Activated naive CD4-positive, alpha-beta T cell treated with anti-CD3 and anti-CD28 coated beads for 36 hours (primary cell): ENCODE measurements at regions of chr4 and their contacts with region 1.

Region 1: GRCh38 chr4:26319467-26319948 is 1.3 kb upstream of the RBPJ start:
- DNase-seq: peak; percentile 99
- H3K4me3 Mint-ChIP-seq: peak overlapping the region; percentile 97
- H3K27ac Mint-ChIP-seq: peak overlapping the region; percentile 99
- H3K4me1 Mint-ChIP-seq: peaks cover 26% of the 10 kb centered on the region
- H3K27me3 Mint-ChIP-seq: no peaks in the 10 kb centered on the region

Region 2: GRCh38 chr4:25312496-25313200 is 1006.9 kb before region 1 on chr4 and contains the start of gene ZCCHC4:
- CTCF ChIA-PET with region 1: no interaction called
- intact Hi-C with region 1: loop called (anchors 10 kb)
- DNase-seq: peak; percentile 88
- H3K4me3 Mint-ChIP-seq: peak within 1 kb of the TSS; percentile 99
- H3K27ac Mint-ChIP-seq: peak within 1 kb of the TSS; percentile 89
- H3K4me1 Mint-ChIP-seq: peaks cover 22% of the 10 kb centered on the region
- H3K27me3 Mint-ChIP-seq: peaks cover 8% of the 10 kb centered on the region
- total RNA-seq, gene ZCCHC4: 10.5 to 11.9 TPM

Region 3: GRCh38 chr4:25330905-25331808 is 988.4 kb before region 1 on chr4:
- CTCF ChIA-PET with region 1: no interaction called
- intact Hi-C with region 1: no loop called
- DNase-seq: no peak
- H3K4me3 Mint-ChIP-seq: peak overlapping the region; percentile 53
- H3K27ac Mint-ChIP-seq: peak overlapping the region; percentile 62
- H3K4me1 Mint-ChIP-seq: peaks cover 17% of the 10 kb centered on the region
- H3K27me3 Mint-ChIP-seq: no peaks in the 10 kb centered on the region

Region 4: DNA sequence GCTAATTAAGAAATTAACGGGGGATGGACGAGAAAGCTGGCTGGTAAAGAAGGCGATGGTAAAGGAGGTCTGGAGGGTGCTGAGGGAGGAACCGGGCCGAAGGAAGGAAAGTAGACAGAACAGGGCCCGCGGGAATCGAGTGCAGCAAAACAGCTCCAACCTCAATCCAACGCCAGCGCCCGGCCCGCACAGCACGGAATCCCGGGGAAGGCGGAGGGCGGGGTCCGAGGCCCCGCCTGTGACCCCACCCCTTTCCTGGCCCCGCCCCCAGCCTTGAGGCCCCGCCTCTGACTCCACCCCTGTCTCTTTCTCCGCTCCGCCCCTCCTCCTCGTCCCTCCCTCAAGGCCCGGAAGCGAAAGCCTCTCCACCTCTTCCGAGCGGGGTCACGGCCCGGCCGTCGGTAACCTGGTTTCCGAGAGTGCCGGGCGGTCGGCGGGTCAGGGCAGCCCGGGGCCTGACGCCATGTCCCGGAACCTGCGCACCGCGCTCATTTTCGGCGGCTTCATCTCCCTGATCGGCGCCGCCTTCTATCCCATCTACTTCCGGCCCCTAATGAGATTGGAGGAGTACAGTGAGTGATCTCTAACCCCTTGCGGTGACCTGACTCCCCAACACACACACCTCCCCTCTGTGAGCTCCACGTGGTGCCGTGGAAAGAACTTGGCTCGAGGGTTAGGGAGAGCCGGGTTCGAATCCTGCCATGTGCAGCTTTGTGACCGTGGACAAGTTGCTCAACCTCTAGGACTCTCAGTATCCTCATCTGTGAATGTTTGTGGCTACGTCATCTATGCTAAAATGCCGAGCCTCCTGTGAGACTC is 405.4 kb before region 1 on chr4 and contains the start of gene SMIM20:
- CTCF ChIA-PET with region 1: no interaction called
- intact Hi-C with region 1: loop called (anchors 1 kb)
- DNase-seq: peak; percentile 89
- H3K4me3 Mint-ChIP-seq: peak within 1 kb of the TSS; percentile 96
- H3K27ac Mint-ChIP-seq: peak within 1 kb of the TSS; percentile 97
- H3K4me1 Mint-ChIP-seq: peaks cover 17% of the 10 kb centered on the region
- H3K27me3 Mint-ChIP-seq: no peaks in the 10 kb centered on the region
- total RNA-seq, gene SMIM20: 28.1 to 33.2 TPM

Region 5: DNA sequence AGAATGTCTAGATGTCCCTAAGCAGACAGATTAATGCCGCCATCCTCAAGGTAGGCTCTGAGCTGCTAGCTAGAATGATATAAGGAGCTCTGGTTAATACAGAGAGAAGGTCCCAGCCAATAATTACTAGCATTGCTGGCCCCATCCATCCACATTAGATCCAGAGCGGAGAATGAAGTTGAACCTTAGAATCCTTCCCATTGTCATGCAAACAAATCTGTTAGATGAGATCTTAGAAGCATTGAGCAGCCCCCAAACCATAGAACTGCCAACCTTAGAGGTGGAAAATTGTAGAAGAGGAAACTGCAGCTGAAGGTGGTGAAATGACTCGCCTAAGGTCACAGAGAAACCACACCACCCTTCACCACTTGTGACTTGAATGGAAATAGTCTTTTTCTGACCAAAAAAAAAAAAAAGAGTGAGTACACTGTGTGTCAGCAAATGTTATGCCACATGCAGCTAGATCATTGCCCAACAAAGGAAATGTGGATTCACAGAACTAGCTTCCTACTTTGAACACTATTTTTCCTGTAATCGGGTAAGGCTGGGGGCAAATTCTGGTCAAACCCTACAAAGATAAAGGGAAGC is 243.4 kb before region 1 on chr4:
- CTCF ChIA-PET with region 1: interaction called, 11 read pairs
- intact Hi-C with region 1: loop called (anchors 1 kb)
- DNase-seq: peak; percentile 80
- H3K4me3 Mint-ChIP-seq: no peak overlapping the region
- H3K27ac Mint-ChIP-seq: peak overlapping the region; percentile 85
- H3K4me1 Mint-ChIP-seq: peaks cover 81% of the 10 kb centered on the region
- H3K27me3 Mint-ChIP-seq: no peaks in the 10 kb centered on the region

Region 6: DNA sequence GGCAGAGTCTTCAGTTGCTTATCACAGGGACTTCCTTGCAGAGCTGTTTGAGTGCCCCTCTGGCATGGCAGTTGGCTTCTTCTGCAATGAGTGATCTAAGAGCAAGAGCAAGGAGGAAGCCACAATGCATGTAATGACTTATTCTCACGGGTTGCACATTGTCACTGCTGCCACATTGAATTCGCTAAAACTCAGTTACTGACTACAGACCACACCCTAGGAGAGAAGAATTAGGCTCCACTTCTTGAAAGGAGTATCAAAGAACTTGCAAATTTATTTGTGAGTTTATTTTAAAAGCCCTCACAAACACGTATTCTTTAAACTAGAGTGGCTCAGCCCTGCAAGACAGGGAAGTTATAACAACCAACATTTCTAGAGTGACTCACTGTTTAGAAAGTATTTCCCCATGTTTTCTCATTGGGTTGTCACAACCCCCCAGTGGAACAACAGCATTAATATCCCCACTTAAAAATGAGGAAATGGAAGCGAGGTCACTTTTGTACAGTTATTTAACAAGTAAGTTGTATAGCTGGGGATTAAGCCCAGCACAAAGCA is 31.1 kb before region 1 on chr4:
- CTCF ChIA-PET with region 1: no interaction called
- intact Hi-C with region 1: loop called (anchors 1 kb)
- DNase-seq: peak; percentile 61
- H3K4me3 Mint-ChIP-seq: no peak overlapping the region
- H3K27ac Mint-ChIP-seq: no peak overlapping the region
- H3K4me1 Mint-ChIP-seq: peaks cover 14% of the 10 kb centered on the region
- H3K27me3 Mint-ChIP-seq: no peaks in the 10 kb centered on the region

Region 7: DNA sequence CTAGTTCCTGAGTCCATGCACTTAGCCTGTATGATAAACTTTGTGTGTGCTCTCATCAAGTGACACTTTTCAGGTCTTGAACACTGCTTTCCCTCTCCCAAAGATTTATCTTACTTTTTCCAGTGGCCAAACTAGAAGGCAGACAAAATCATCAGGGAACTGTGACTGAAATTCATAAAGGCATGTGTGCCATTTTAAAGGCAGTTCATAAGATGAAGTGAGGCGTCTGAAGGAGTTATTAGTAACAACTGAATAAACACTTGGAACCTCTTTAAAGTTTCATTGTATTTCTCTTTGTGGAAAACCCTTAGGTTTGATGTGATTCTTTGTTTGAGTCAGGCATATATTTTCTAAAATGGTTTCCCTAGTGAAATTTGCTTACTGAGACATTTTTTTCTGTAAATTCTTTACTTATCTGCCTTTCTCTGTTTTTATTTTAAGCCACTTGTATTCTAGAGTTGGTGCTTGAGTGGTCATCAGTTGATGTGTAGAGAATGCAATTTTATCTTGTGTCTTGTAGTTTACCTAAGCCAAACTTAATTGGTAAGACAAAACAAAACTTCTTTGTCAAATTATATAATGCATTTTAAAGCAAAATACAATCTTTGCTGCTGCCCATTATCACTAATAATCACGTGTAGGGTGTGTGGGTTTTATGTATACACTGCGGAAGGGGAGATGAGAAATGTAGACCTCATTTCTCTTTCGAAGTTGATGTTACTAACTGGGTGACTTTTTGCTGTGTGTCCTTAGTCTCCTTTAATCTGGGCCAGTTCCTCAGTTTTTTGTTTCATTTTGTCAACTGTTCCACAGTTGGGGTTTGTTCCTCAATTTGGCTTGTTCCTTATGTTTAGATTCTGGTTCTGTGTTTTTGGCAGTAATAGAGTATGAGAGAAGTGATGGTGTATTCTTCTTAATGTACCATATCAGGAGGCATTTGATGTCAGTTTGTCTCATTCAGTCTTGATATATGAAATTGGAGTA is 58.1 kb after region 1 on chr4:
- CTCF ChIA-PET with region 1: no interaction called
- intact Hi-C with region 1: no loop called
- DNase-seq: no peak
- H3K4me3 Mint-ChIP-seq: no peak overlapping the region
- H3K27ac Mint-ChIP-seq: no peak overlapping the region
- H3K4me1 Mint-ChIP-seq: peaks cover 50% of the 10 kb centered on the region
- H3K27me3 Mint-ChIP-seq: no peaks in the 10 kb centered on the region

Region 8: DNA sequence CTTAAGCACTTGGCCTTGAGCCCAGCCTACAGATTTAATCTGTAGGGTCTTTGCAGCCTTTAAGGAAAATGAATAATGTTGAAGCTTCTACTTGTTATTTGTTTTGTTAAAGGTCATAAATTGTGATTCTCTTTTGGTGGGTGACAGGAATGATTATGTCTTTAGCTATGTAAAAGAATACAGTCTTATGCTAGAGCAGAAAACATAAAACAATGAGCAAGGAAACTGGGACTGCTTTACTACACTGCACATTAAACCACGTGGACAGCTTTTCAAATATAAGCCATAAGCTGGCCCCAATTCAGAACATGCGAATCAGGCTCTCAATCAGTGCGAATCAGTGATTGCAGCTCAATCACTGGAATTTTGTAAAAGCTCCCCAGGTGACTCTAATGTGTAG is 223.5 kb after region 1 on chr4:
- CTCF ChIA-PET with region 1: no interaction called
- intact Hi-C with region 1: no loop called
- DNase-seq: no peak
- H3K4me3 Mint-ChIP-seq: no peak overlapping the region
- H3K27ac Mint-ChIP-seq: no peak overlapping the region
- H3K4me1 Mint-ChIP-seq: no peaks in the 10 kb centered on the region
- H3K27me3 Mint-ChIP-seq: no peaks in the 10 kb centered on the region

Region 9: GRCh38 chr4:26878794-26879391 is 559.4 kb after region 1 on chr4:
- CTCF ChIA-PET with region 1: no interaction called
- intact Hi-C with region 1: loop called (anchors 5 kb)
- DNase-seq: no peak
- H3K4me3 Mint-ChIP-seq: peak overlapping the region; percentile 63
- H3K27ac Mint-ChIP-seq: peak overlapping the region; percentile 99
- H3K4me1 Mint-ChIP-seq: peaks cover 80% of the 10 kb centered on the region
- H3K27me3 Mint-ChIP-seq: no peaks in the 10 kb centered on the region